H1 (cell line): ENCODE measurements at regions of chr12 and their contacts with region 1.

Region 1: GRCh38 chr12:47797441-47797840 is 22.3 kb downstream of the HDAC7 start:
- DNase-seq: peak in 1 of 2 experiments; percentile 71
- H3K4me3 ChIP-seq: no peak overlapping the region
- H3K27ac ChIP-seq: no peak overlapping the region
- H3K4me1 ChIP-seq: peaks cover 0 to 13% (median 3%) of the 10 kb centered on the region in 4 experiments; a peak in 5 of 7 replicates
- H3K27me3 ChIP-seq: no peaks in the 10 kb centered on the region
- CTCF ChIP-seq: peak; percentile 76 to 92 (median 78)
- EP300 ChIP-seq: no peak
- POLR2A ChIP-seq: no peak
- RAD21 ChIP-seq: peak; percentile 84 to 90

Region 2: DNA sequence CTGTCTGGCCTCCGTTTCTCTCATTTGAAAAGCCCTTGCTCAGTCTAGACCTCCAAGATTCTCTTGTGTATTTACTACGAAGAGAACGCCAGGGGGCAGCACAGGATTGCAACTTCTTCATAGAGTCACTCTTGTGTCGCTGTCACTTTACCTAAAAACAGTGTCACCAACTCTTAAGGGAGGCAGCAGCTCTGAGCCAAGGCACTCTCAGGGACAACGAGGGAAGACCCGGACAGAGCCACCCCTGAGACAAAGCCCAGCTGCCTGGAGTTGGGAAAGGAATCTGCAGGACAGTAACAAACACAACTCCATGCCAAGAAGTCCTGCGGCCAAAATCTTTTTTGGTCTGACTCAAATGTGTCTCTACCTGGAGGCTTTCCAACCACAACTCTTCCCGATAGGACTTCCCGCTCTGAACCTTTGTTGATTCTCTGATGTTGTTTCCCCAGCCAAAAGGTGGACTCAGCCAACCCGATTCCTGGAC is 82.0 kb before region 1 on chr12:
- CTCF ChIA-PET with region 1: interaction called, 2,442 read pairs
- POLR2A ChIA-PET with region 1: no interaction called
- DNase-seq: peak in 1 of 2 experiments; percentile 79
- H3K4me3 ChIP-seq: no peak overlapping the region
- H3K27ac ChIP-seq: no peak overlapping the region
- H3K4me1 ChIP-seq: peaks cover 4 to 9% (median 8%) of the 10 kb centered on the region in 4 experiments; a peak in 5 of 7 replicates
- H3K27me3 ChIP-seq: peaks cover 0 to 7% (median 3%) of the 10 kb centered on the region in 4 experiments; a peak in 3 of 7 replicates
- CTCF ChIP-seq: peak in 2 of 3 experiments; percentile 77 to 84; a peak in 3 of 4 replicates
- EP300 ChIP-seq: no peak
- POLR2A ChIP-seq: no peak
- RAD21 ChIP-seq: peak; percentile 84 to 88

Region 3: DNA sequence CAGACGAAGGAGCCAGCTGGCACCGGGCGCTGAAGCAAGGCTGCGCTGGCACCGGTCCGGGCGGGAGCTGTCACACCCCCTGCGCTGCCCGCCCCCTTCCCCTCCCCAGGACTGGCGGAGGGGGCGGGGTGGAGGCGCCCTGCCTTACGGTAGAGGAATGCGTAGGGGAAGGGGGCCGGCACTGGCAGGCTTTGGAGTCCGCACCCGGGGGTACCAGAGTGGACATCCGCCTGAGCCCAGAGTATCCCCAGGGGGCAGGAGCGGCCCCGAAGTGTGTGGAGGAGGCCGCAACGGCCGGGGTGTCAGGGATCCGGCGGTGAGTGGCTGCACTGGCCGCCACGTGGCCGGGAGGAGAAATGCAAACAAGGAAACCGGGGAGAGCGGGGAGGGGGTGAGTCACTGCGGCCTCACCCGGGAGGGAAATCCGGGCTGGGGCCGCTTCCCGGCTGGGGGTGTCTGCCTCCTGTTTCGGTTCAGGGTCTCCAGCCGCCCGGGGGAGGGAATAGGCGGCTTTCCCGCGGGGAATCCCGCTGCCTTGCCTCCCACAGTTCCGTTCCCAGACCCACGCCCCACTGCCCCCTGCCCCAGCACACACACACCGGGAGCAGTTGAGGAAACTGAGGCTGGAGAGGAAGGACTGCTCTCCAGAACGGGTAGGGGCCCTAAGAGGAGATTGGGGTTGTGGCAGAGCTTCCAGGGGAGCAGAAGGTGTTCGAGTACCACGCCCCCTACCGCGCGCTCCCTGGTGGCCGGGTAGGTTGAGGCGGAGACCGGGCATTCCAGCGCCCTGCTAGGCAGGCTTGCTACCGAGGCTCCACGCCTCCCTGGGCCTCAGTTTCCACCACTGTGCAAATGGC is 38.4 kb before region 1 on chr12 and contains the start of gene RAPGEF3:
- CTCF ChIA-PET with region 1: interaction called, 2,442 read pairs
- POLR2A ChIA-PET with region 1: no interaction called
- DNase-seq: peak in 1 of 2 experiments; percentile 81
- H3K4me3 ChIP-seq: peak within 1 kb of the TSS; percentile 32 to 72 (median 45)
- H3K27ac ChIP-seq: no peak within 1 kb of the TSS
- H3K4me1 ChIP-seq: peaks cover 6 to 15% (median 10%) of the 10 kb centered on the region in 4 experiments; a peak in 6 of 7 replicates
- H3K27me3 ChIP-seq: peaks cover 0 to 2% (median 0%) of the 10 kb centered on the region in 4 experiments; a peak in 2 of 7 replicates
- CTCF ChIP-seq: peak; percentile 46 to 60 (median 49); a peak in 3 of 4 replicates
- EP300 ChIP-seq: peak in 1 of 2 experiments; percentile 33; a peak in 1 of 3 replicates
- POLR2A ChIP-seq: no peak; a peak in 1 of 3 replicates
- RAD21 ChIP-seq: peak; percentile 29 to 35
- total RNA-seq, gene RAPGEF3: 6.7 and 9.4 TPM in 2 replicates

Region 4: GRCh38 chr12:47767216-47767724 is 30.2 kb before region 1 on chr12:
- CTCF ChIA-PET with region 1: interaction called, 2,442 read pairs
- POLR2A ChIA-PET with region 1: interaction called, 7 read pairs
- DNase-seq: peak in 1 of 2 experiments; percentile 77
- H3K4me3 ChIP-seq: no peak overlapping the region
- H3K27ac ChIP-seq: no peak overlapping the region
- H3K4me1 ChIP-seq: peaks cover 3 to 12% (median 9%) of the 10 kb centered on the region in 4 experiments; a peak in 5 of 7 replicates
- H3K27me3 ChIP-seq: no peaks in the 10 kb centered on the region; a peak in 1 of 7 replicates
- CTCF ChIP-seq: peak; percentile 63 to 89 (median 77)
- EP300 ChIP-seq: no peak
- POLR2A ChIP-seq: no peak
- RAD21 ChIP-seq: peak; percentile 83 to 87

Region 5: GRCh38 chr12:47812797-47813510 is 15.5 kb after region 1 on chr12:
- CTCF ChIA-PET with region 1: interaction called, 318 read pairs
- POLR2A ChIA-PET with region 1: interaction called, 32 read pairs
- DNase-seq: peak; percentile 81 to 83
- H3K4me3 ChIP-seq: peak overlapping the region; percentile 14 to 55 (median 40); a peak in 7 of 8 replicates
- H3K27ac ChIP-seq: peak overlapping the region; percentile 79
- H3K4me1 ChIP-seq: peaks cover 28 to 72% (median 58%) of the 10 kb centered on the region in 4 experiments
- H3K27me3 ChIP-seq: no peaks in the 10 kb centered on the region
- CTCF ChIP-seq: no peak
- EP300 ChIP-seq: peak in 1 of 2 experiments; percentile 77; a peak in 1 of 3 replicates
- POLR2A ChIP-seq: no peak
- RAD21 ChIP-seq: no peak

Region 6: DNA sequence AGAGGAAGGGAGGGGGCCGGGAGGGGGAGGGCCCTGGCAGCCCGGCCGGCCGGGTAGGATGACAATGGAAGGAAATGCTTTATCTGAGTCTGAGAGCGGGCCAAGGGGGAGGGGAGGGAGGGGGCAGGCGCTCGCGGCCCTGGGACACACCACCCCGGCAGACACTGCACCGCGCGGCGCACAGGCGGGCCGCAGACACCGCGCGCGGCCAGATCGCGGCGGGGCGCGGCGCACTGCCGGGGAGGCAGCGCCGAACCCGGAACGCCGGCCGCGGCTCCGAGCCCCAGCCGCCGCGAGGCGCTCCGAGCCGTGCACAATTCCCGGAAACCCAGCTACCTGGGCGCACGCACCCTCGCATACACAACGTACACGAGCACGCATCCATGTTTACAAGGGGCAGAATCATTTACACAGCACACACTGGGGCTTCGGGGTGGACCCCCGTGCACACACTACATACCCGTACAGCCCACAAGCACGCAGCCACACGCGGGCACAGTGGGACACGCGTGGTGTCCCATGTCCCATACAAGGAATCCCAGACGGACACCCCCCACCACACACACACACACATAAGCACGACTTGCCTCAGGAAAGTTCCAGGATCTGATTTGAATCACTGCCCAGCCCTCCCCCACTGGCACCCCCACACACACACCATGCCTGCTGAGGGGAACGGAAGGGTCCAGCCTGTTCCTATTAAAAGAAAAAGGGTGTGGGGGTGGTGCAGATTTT is 22.6 kb after region 1 on chr12 and contains the start of gene HDAC7:
- CTCF ChIA-PET with region 1: interaction called, 2,001 read pairs
- POLR2A ChIA-PET with region 1: interaction called, 480 read pairs
- DNase-seq: no peak
- H3K4me3 ChIP-seq: peak within 1 kb of the TSS; percentile 65 to 79 (median 66)
- H3K27ac ChIP-seq: peak within 1 kb of the TSS; percentile 93
- H3K4me1 ChIP-seq: peaks cover 5 to 41% (median 35%) of the 10 kb centered on the region in 4 experiments
- H3K27me3 ChIP-seq: no peaks in the 10 kb centered on the region; a peak in 2 of 7 replicates
- CTCF ChIP-seq: no peak
- EP300 ChIP-seq: no peak
- POLR2A ChIP-seq: peak in 1 of 2 experiments; percentile 68; a peak in 2 of 3 replicates
- RAD21 ChIP-seq: no peak
- total RNA-seq, gene HDAC7: 82.0 and 84.9 TPM in 2 replicates